Aorta (tissue), 5 donors: ENCODE measurements at regions of chr19 and their contacts with region 1.

Region 1: DNA sequence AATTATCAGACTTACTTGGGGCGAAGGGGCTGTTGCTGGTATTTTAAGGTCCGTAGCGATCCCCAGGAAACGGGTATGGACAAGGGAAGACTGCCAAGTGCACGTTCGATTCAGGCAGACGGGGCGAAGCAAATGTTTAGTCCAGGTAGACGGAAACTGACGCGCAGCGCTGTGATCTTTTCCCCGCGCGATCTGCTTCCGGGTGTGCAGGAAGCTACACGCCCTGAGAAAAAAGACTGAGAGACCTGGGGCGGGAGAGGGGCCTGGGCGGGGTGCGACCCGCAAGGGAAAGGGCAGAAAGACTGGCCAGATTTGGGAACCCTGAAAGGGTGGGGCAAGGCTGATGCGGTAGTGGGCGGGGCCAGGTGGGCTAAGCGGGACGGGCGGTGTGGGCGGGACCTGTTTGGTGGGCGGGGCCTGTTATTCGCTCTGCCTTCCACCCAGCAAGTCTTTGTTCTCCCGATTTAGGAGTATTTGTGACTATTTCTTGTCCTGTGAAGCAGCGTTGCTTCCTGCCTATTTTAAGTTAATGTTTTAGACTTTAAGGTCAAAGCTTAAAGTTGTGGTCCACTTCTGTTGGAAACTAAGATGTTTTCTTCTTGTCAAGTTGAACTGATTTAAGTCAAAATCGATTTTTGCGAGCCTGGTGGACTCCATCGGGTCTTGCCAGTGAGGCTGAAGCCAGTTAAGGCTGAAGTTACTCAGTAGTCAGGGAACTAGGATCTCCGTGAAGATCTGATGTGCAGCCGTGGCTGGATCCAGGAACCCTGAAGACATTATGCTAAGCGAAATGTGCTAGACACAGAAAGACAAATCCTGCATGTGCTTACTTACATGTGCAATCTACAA is at the start of gene ZNF836:
- DNase-seq: peak; percentile 94 to 97
- ATAC-seq: peak; percentile 97
- H3K4me3 ChIP-seq: peak within 1 kb of the TSS; percentile 91 to 99
- H3K27ac ChIP-seq: peak within 1 kb of the TSS; percentile 78 to 89
- H3K4me1 ChIP-seq: no peaks in the 10 kb centered on the region
- H3K27me3 ChIP-seq: no peaks in the 10 kb centered on the region
- total RNA-seq, gene ZNF836: 15.4 to 20.3 TPM

Region 2: DNA sequence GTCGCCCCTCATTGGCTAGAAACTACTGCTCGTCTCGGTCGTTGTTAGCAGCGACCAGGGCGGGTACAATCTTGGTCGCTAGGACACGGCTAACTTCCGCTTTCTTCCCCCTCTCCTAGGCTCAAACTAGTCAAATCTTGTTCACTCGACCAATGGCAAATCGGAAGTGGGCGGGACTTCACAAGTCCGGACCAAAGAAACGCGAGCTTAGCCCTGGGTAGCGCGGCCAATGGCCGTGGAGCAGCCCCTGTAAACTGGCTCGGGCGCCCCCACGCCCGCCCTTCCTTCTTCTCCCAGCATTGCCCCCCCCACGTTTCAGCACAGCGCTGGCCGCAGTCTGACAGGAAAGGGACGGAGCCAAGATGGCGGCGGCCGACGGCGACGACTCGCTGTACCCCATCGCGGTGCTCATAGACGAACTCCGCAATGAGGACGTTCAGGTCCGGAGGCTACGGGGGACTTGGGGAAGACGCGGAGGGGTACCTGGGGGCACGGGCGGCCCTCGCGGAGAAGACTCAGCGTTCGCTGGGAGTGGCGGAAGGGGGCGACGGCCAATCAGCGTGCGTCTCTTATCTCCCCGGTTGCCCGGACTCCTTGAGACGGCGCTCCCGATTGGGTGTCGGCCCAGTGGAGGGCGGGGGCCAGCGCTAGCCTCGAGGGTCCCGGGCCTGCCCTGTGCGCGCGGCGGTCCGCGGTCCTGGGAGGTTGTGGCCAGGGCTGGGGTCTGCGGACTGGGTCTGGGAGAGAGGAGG is 18.4 kb after region 1 on chr19 and contains the start of gene PPP2R1A:
- intact Hi-C with region 1: loop called in 1 of 2 experiments (anchors 1 kb)
- DNase-seq: peak; percentile 99 to 100
- ATAC-seq: peak; percentile 98
- H3K4me3 ChIP-seq: peak within 1 kb of the TSS; percentile 70 to 73
- H3K27ac ChIP-seq: peak within 1 kb of the TSS; percentile 90 to 93
- H3K4me1 ChIP-seq: peaks cover 2 to 12% of the 10 kb centered on the region in 2 donors
- H3K27me3 ChIP-seq: no peaks in the 10 kb centered on the region
- total RNA-seq, gene PPP2R1A: 174 to 178 TPM

Region 3: GRCh38 chr19:52200044-52200443 is 28.5 kb after region 1 on chr19:
- intact Hi-C with region 1: loop called in 1 of 2 experiments (anchors 2 kb)
- DNase-seq: peak; percentile 55 to 76
- ATAC-seq: peak; percentile 86
- H3K4me3 ChIP-seq: no peak overlapping the region
- H3K27ac ChIP-seq: peak overlapping the region; percentile 44 to 92
- H3K4me1 ChIP-seq: peaks cover 0 to 5% of the 10 kb centered on the region in 2 donors
- H3K27me3 ChIP-seq: no peaks in the 10 kb centered on the region

Region 4: DNA sequence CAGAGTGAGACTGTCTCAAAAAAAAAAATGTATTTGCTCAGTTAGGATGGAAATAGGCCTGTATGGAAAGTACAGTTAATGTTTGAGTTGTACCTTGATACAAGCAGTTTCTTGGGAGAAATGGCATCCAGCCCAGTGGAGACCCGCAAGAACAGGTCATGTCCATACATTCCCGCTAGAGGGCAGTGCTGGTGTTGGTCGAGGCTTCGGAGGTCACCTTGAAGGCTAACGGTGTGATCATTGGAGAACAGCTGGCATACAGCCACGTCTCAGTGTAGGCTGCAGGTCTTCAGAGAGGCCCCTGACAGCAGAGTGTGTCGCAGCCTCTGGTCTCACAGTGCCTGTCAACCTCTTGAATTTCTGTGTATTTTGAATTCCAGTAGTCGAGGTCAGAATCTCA is 172.0 kb after region 1 on chr19:
- intact Hi-C with region 1: no loop called
- DNase-seq: no peak
- ATAC-seq: peak; percentile 50
- H3K4me3 ChIP-seq: no peak overlapping the region
- H3K27ac ChIP-seq: no peak overlapping the region
- H3K4me1 ChIP-seq: no peaks in the 10 kb centered on the region
- H3K27me3 ChIP-seq: no peaks in the 10 kb centered on the region